ENCODE measurements at regions of chr11 and their contacts with region 1.

Region 1: GRCh38 chr11:130131961-130132850 is 27.4 kb upstream of the ST14 start:
- DNase-seq: peak; percentile 72
- ATAC-seq: peak; percentile 85
- H3K4me3 ChIP-seq: no peak overlapping the region
- H3K27ac ChIP-seq: no peak overlapping the region
- H3K4me1 ChIP-seq: no peaks in the 10 kb centered on the region
- H3K27me3 ChIP-seq: no peaks in the 10 kb centered on the region
- CTCF ChIP-seq: peak; percentile 94

Region 2: DNA sequence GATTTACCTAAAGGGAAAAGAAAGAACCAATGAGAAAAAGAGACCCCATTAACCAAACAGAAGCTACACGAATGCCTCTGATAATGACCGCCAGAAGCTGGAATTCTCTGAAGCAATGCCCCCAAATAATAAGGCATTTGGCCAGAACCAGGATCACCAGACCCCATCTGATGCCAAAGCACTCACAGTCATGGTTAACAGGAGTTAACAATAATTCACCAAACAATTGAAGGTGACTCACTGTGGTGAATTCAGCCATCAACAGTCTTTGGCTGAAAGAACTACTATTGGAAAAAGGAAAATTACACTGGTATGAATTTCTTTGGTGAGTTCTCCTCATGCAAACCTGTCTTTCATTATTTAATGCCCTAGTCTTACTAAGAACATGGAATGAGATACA is 215.0 kb before region 1 on chr11:
- CTCF ChIA-PET with region 1: interaction called, 28 read pairs
- POLR2A ChIA-PET with region 1: interaction called, 13 read pairs
- in situ Hi-C with region 1: no loop called
- intact Hi-C with region 1: no loop called
- DNase-seq: no peak
- ATAC-seq: no peak
- H3K4me3 ChIP-seq: no peak overlapping the region
- H3K27ac ChIP-seq: no peak overlapping the region
- H3K4me1 ChIP-seq: no peaks in the 10 kb centered on the region
- H3K27me3 ChIP-seq: no peaks in the 10 kb centered on the region
- CTCF ChIP-seq: no peak

Region 3: GRCh38 chr11:129922674-129923073 is 209.5 kb before region 1 on chr11:
- CTCF ChIA-PET with region 1: interaction called, 28 read pairs
- POLR2A ChIA-PET with region 1: no interaction called
- in situ Hi-C with region 1: no loop called
- intact Hi-C with region 1: loop called (anchors 1 kb)
- DNase-seq: no peak
- ATAC-seq: no peak
- H3K4me3 ChIP-seq: no peak overlapping the region
- H3K27ac ChIP-seq: no peak overlapping the region
- H3K4me1 ChIP-seq: no peaks in the 10 kb centered on the region
- H3K27me3 ChIP-seq: no peaks in the 10 kb centered on the region
- CTCF ChIP-seq: no peak

Region 4: GRCh38 chr11:129930296-129930695 is 201.9 kb before region 1 on chr11:
- CTCF ChIA-PET with region 1: interaction called, 17 read pairs
- POLR2A ChIA-PET with region 1: no interaction called
- in situ Hi-C with region 1: no loop called
- intact Hi-C with region 1: no loop called
- DNase-seq: no peak
- ATAC-seq: no peak
- H3K4me3 ChIP-seq: no peak overlapping the region
- H3K27ac ChIP-seq: no peak overlapping the region
- H3K4me1 ChIP-seq: no peaks in the 10 kb centered on the region
- H3K27me3 ChIP-seq: no peaks in the 10 kb centered on the region
- CTCF ChIP-seq: no peak

Region 5: GRCh38 chr11:129992161-129992944 is 139.9 kb before region 1 on chr11:
- CTCF ChIA-PET with region 1: interaction called, 33 read pairs
- POLR2A ChIA-PET with region 1: no interaction called
- in situ Hi-C with region 1: no loop called
- intact Hi-C with region 1: loop called (anchors 2 kb)
- DNase-seq: no peak
- ATAC-seq: peak; percentile 82
- H3K4me3 ChIP-seq: no peak overlapping the region
- H3K27ac ChIP-seq: peak overlapping the region; percentile 62; the same call in 1 of the 2 replicates
- H3K4me1 ChIP-seq: peaks cover 18% of the 10 kb centered on the region; the same call in 1 of the 2 replicates
- H3K27me3 ChIP-seq: no peaks in the 10 kb centered on the region
- CTCF ChIP-seq: no peak

Region 6: DNA sequence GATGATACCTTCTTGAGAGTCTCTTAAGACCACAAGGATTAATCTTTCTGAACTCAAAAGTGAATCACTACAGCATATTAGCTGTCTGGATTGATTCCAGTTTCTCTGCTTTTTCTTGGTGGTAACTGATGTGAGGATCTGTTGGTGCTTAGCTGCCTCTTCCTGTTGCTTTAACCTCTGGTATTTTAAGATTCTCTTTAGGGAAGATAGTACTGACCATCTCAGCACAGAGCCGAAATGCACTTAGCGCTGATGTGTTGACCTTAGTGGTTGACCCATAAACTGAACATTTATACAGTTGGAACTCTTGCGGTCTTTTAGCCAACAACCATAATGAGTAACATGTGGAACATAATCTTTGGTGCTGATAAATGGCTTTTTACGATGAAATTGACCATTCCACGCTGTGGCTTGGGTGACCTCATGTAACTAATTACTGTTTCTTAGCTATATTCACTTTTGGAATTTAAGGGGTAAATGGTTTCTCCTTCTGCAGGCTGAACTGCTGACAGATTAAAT is 28.9 kb before region 1 on chr11:
- CTCF ChIA-PET with region 1: no interaction called
- POLR2A ChIA-PET with region 1: no interaction called
- in situ Hi-C with region 1: no loop called
- intact Hi-C with region 1: no loop called
- DNase-seq: no peak
- ATAC-seq: peak; percentile 61; the same call in 1 of the 2 replicates
- H3K4me3 ChIP-seq: no peak overlapping the region
- H3K27ac ChIP-seq: peak overlapping the region; percentile 23; the same call in 1 of the 2 replicates
- H3K4me1 ChIP-seq: peaks cover 54% of the 10 kb centered on the region
- H3K27me3 ChIP-seq: no peaks in the 10 kb centered on the region
- CTCF ChIP-seq: no peak

Region 7: GRCh38 chr11:130403271-130403804 is 271.1 kb after region 1 on chr11:
- CTCF ChIA-PET with region 1: no interaction called
- POLR2A ChIA-PET with region 1: no interaction called
- in situ Hi-C with region 1: no loop called
- intact Hi-C with region 1: no loop called
- DNase-seq: peak; percentile 25
- ATAC-seq: peak; percentile 69
- H3K4me3 ChIP-seq: no peak overlapping the region
- H3K27ac ChIP-seq: no peak overlapping the region
- H3K4me1 ChIP-seq: peaks cover 8% of the 10 kb centered on the region; the same call in 1 of the 2 replicates
- H3K27me3 ChIP-seq: 0 out of 2 replicates have a peak, but pooled peaks cover 5% of the 10 kb centered on the region
- CTCF ChIP-seq: no peak